ENCODE measurements at regions of chr11 and their contacts with region 1.

Region 1: GRCh38 chr11:22829231-22830081 is at the start of gene SVIP:
- DNase-seq: peak; percentile 88
- H3K4me3 Mint-ChIP-seq: peak within 1 kb of the TSS; percentile 94
- H3K27ac Mint-ChIP-seq: peak within 1 kb of the TSS; percentile 88
- H3K4me1 Mint-ChIP-seq: peaks cover 14% of the 10 kb centered on the region
- H3K27me3 Mint-ChIP-seq: no peaks in the 10 kb centered on the region
- total RNA-seq, gene SVIP: 45.1 and 47.5 TPM in 2 replicates

Region 2: DNA sequence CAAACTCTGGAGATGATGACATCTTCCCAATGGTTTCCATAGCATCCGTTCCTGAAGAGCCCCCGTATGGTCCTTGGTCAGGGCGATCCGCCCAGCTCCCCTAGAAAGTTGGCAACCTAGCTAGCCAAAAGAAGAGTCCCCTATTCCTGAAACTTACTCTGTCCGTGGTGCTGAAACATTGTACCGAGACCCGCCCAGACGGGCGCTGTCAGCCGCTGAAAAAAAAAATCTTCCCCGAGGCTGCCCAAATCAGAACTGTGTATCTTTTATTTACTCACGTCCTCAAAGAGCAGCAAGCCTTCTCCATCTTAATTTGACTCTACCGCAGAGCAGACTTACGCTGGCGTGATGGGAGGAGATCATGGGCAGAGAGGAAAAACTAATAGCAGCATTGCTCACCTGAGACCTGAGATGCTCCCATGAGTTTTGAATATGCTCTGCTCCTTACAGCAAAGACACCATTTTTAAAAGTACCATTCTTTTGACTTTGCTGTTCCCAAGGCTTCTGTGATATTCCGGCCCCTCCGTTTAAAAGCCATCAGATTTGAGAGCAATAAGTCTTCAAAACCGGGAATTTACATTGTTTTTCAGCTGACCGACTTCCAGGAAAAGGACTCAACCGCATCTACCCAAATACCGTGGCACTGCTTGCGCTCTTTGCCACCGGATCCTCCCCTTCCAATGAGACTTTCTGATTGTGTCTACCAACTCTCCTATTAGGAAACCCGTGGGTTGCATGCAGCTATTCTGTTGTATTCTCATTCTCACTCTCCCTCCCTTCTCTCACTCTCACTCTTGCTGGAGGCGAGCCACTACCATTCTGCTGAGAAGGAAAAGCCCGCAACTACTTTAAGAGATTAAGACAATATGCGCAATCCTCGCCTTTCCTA is 491.6 kb before region 1 on chr11 and contains the start of gene SLC17A6:
- intact Hi-C with region 1: loop called (anchors 2 kb)
- DNase-seq: no peak
- H3K4me3 Mint-ChIP-seq: no peak within 1 kb of the TSS
- H3K27ac Mint-ChIP-seq: no peak within 1 kb of the TSS
- H3K4me1 Mint-ChIP-seq: peaks cover 5% of the 10 kb centered on the region
- H3K27me3 Mint-ChIP-seq: peaks cover 51% of the 10 kb centered on the region
- total RNA-seq, gene SLC17A6: not detected in 2 replicates

Region 3: GRCh38 chr11:22491555-22492225 is 337.8 kb before region 1 on chr11:
- intact Hi-C with region 1: no loop called
- DNase-seq: no peak
- H3K4me3 Mint-ChIP-seq: no peak overlapping the region
- H3K27ac Mint-ChIP-seq: no peak overlapping the region
- H3K4me1 Mint-ChIP-seq: no peaks in the 10 kb centered on the region
- H3K27me3 Mint-ChIP-seq: no peaks in the 10 kb centered on the region

Region 4: DNA sequence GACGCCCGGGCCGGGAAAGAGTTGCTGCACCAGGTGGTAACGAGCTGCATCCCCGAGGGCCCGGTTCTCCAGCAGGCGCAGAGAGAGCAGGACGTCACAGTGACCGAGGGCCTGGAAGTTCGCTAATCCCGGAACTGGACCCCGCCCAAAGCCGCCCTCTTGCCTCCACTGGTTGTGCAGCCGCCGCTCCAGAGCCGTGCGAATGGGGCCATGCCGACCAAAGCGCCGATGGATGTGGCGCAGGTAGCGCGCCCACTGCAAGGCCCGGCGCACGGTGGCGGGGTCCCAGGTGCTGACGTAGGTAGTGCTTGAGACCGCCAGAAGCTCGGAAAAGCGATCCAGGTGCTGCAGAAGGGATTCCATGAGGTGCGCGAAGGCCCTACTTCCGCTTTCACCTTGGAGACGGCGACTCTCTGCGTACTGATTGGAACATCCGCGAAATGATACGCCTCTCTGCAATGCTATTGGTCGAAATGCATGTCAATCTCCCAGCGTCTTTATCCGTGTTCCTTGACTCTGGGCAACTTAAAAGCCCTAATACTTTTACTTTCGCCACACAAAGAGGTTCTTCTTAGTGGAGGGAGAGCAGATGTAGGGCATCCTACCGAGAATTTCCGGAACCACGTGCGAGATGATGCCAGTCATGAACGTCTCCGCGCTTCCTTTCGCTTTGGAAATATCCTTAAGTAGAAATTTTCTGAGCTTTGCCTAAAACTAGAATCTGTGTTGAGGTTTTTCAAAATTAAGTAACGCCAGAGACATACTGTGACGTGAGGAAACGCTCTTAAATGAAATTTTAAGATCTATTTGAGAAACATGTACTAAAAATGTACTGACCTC is 203.8 kb before region 1 on chr11 and contains the start of gene FANCF:
- intact Hi-C with region 1: loop called (anchors 1 kb)
- DNase-seq: peak; percentile 92
- H3K4me3 Mint-ChIP-seq: peak within 1 kb of the TSS; percentile 99
- H3K27ac Mint-ChIP-seq: peak within 1 kb of the TSS; percentile 98
- H3K4me1 Mint-ChIP-seq: peaks cover 31% of the 10 kb centered on the region
- H3K27me3 Mint-ChIP-seq: no peaks in the 10 kb centered on the region
- total RNA-seq, gene FANCF: 16.9 and 19.9 TPM in 2 replicates

Region 5: GRCh38 chr11:23166376-23166775 is 336.9 kb after region 1 on chr11:
- intact Hi-C with region 1: no loop called
- DNase-seq: no peak
- H3K4me3 Mint-ChIP-seq: no peak overlapping the region
- H3K27ac Mint-ChIP-seq: no peak overlapping the region
- H3K4me1 Mint-ChIP-seq: no peaks in the 10 kb centered on the region
- H3K27me3 Mint-ChIP-seq: no peaks in the 10 kb centered on the region